Activated naive CD4-positive, alpha-beta T cell treated with anti-CD3 and anti-CD28 coated beads for 36 hours (primary cell): ENCODE measurements at regions of chr1 and their contacts with region 1.

Region 1: GRCh38 chr1:210233216-210234020 is 822 bp downstream of the SERTAD4 start:
- DNase-seq: peak; percentile 45
- H3K4me3 Mint-ChIP-seq: peak overlapping the region; percentile 36
- H3K27ac Mint-ChIP-seq: no peak overlapping the region
- H3K4me1 Mint-ChIP-seq: peaks cover 2% of the 10 kb centered on the region
- H3K27me3 Mint-ChIP-seq: peaks cover 52% of the 10 kb centered on the region

Region 2: DNA sequence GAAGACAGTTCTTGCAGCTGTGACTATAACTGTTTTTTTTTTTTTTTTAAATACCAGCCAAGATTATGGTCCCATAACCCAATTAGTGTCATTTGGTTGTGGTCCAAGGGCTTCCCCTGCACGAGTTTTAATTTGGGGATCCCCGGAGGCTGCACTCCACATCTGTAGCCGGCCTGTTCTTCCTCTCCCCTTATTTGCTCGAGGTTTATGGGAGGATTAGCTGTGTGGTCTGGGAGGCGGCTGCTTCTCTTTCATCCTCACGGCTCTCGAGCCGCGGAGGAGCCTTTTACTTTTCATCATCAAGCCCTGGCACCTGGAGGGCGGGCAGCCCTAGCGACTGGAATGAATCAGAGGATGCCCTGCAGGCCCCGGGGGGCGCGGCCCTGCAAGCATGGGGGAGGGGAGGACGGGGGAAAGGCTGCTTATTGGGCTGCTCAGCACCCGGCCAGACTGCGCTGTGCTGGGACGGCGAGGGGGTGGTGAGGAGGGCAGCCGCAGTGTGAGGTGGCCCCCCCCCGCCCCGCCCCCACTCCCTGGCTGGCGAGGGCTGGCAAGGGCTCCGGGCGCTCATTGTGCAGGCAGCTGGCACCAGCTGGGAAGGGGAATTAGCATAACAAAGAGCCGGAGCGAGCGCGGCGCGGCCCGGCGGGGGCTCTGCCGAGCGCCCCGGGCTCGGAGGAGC is 17.7 kb after region 1 on chr1:
- CTCF ChIA-PET with region 1: no interaction called
- intact Hi-C with region 1: loop called (anchors 1 kb)
- DNase-seq: peak; percentile 61
- H3K4me3 Mint-ChIP-seq: peak overlapping the region; percentile 40
- H3K27ac Mint-ChIP-seq: no peak overlapping the region
- H3K4me1 Mint-ChIP-seq: peaks cover 27% of the 10 kb centered on the region
- H3K27me3 Mint-ChIP-seq: peaks cover 77% of the 10 kb centered on the region